ENCODE measurements at regions of chr22 and their contacts with region 1.

Region 1: DNA sequence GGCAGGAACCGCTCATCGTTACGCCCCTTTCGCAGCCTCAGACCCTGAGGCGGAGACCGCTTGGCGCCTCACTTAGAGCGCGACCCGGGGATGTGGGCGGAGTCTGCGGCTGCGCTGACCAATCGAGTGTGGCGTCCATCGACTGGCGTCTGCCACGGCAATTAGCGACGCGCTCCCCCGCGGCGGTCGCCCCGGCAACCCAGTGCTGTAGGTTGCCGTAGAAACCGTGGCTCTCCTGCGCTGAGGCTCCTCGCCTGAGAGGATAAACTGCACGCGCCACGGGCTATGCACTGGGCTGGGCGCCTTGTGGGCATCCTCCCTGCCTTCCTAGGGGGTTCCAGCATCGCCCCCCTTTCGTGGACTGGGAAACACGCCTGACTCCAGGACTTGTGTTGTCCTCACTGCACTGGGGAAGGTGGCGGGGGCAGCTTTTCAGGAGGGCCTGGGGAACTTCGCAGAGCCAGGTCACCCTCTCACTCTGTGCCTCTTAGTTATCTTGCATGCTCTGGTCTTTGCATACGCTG is 701 bp upstream of the P2RX6 start:
- DNase-seq: peak; percentile 78
- H3K4me3 ChIP-seq: peak overlapping the region; percentile 51 to 64 (median 63)
- H3K27ac ChIP-seq: peak overlapping the region; percentile 55
- H3K4me1 ChIP-seq: peaks cover 20% of the 10 kb centered on the region
- H3K27me3 ChIP-seq: no peaks in the 10 kb centered on the region
- CTCF ChIP-seq: no peak

Region 2: GRCh38 chr22:21026783-21027611 is 12.7 kb after region 1 on chr22:
- CTCF ChIA-PET with region 1: no interaction called
- dilution Hi-C with region 1: no loop called
- in situ Hi-C with region 1: no loop called
- intact Hi-C with region 1: loop called (anchors 1 kb)
- DNase-seq: peak; percentile 43
- H3K4me3 ChIP-seq: no peak overlapping the region
- H3K27ac ChIP-seq: no peak overlapping the region
- H3K4me1 ChIP-seq: peaks cover 31% of the 10 kb centered on the region
- H3K27me3 ChIP-seq: no peaks in the 10 kb centered on the region
- CTCF ChIP-seq: no peak